ENCODE measurements at regions of chr22 and their contacts with region 1.

Region 1: GRCh38 chr22:30089655-30089974 is 9.4 kb downstream of the HORMAD2 start:
- DNase-seq: no peak
- H3K4me3 ChIP-seq: no peak overlapping the region
- H3K27ac ChIP-seq: no peak overlapping the region
- H3K4me1 ChIP-seq: no peaks in the 10 kb centered on the region
- H3K27me3 ChIP-seq: no peaks in the 10 kb centered on the region
- CTCF ChIP-seq: no peak

Region 2: DNA sequence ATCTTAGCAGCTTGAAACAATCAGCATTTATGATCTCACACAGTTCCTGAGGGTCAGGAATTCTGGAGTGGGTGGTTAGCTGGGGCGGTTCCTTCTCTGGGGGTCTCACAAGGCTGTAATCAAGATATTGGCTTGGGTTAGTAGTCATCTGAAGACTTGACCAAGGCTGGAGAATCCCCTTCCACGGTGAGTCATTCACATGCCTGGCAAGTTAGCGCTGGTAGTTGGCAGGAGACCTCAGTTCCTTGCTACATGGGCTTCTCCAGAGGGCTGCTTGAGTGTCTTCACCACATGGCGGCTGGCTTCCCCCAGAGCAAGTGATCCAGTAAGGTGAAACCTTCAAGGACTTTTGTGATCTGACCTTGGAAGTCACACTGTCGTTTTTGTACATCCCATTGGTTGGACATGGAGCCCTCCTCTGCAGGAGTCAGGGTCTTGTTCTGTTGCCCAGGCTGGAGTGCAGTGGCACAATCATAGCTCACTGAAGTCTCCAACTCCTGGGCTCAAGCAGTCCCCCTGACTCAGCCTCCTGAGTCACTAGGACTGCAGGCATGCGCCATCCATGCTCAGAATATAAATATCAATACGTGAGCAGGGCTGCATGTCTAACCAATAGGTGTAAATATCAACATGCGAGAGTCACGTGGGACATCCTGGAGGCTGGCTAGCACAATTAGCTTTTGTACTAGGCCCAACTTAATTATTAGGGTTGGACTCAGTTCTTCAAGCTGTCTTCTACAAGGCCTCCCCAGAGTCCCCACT is 501.5 kb before region 1 on chr22:
- intact Hi-C with region 1: loop called (anchors 5 kb)
- DNase-seq: no peak
- H3K4me3 ChIP-seq: no peak overlapping the region
- H3K27ac ChIP-seq: no peak overlapping the region
- H3K4me1 ChIP-seq: no peaks in the 10 kb centered on the region
- H3K27me3 ChIP-seq: no peaks in the 10 kb centered on the region
- CTCF ChIP-seq: no peak

Region 3: GRCh38 chr22:29635734-29636357 is 453.8 kb before region 1 on chr22:
- intact Hi-C with region 1: loop called (anchors 5 kb)
- DNase-seq: no peak
- H3K4me3 ChIP-seq: no peak overlapping the region
- H3K27ac ChIP-seq: no peak overlapping the region
- H3K4me1 ChIP-seq: no peaks in the 10 kb centered on the region
- H3K27me3 ChIP-seq: no peaks in the 10 kb centered on the region
- CTCF ChIP-seq: peak; percentile 34 to 53 (median 39)

Region 4: DNA sequence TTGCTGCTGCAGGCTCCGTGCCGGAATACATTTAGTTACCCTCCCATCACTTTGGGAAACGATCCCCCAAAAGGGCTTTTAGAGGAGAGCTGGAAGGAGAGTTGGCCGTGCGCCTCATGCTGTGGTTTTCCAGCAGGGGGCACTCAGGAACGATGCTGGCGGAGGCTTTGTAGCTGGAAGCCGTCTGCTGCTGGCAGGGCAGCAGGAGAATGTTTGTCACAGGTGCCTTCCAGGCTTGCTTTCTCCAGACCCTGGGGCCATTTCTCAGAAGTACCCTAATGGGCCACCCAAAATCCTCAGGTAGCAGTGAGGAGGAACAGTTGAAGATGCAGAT is 399.8 kb before region 1 on chr22:
- intact Hi-C with region 1: loop called (anchors 5 kb)
- DNase-seq: no peak
- H3K4me3 ChIP-seq: no peak overlapping the region
- H3K27ac ChIP-seq: no peak overlapping the region
- H3K4me1 ChIP-seq: no peaks in the 10 kb centered on the region
- H3K27me3 ChIP-seq: no peaks in the 10 kb centered on the region
- CTCF ChIP-seq: peak in 2 of 3 experiments; percentile 20 to 49

Region 5: GRCh38 chr22:30150212-30150611 is 60.6 kb after region 1 on chr22:
- intact Hi-C with region 1: no loop called
- DNase-seq: no peak
- H3K4me3 ChIP-seq: no peak overlapping the region
- H3K27ac ChIP-seq: no peak overlapping the region
- H3K4me1 ChIP-seq: no peaks in the 10 kb centered on the region
- H3K27me3 ChIP-seq: no peaks in the 10 kb centered on the region
- CTCF ChIP-seq: no peak

Region 6: DNA sequence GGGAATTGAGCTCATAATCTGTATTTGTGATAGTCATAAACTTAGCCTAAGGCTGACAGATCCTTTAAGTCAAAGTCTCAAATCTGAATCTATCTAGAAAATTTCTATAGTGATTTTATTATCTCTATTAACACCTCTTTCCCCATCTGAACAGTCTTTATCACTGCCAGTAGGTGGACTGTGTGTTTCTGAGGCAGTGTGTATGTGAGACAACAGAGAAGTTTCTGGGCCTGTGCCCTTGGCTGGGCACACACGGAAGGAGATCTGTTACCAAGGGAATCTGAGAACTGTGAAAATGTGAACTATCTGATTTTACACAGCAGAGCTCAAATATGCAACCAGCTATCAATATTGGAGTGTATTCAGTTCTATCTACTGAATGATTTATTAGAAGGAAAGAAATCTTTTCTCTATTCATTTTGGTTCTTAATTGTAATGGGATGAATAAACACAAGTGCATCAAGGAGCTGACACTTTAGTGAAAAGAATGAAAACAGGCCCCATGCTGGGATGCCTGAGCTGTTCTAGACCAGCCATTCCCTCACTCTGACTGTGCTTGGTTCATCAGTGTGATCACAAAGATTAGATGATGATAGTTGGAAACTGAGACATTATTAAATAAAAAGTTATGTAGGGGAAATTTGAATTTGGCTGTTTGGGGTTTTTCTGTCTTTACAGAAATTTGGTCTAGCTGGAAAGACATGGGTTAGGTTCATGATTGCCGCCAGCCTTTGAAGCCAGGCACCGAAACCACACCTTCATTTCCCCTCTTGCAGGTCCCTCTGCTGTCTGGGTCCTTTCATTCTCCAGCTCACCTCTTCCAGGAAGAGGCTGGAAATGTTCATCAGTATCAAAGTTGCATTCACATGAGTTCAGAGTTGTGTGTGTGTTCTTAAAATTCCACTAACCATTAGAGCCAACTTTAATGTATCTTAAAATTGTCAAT is 88.8 kb after region 1 on chr22:
- intact Hi-C with region 1: no loop called
- DNase-seq: no peak
- H3K4me3 ChIP-seq: no peak overlapping the region
- H3K27ac ChIP-seq: no peak overlapping the region
- H3K4me1 ChIP-seq: no peaks in the 10 kb centered on the region
- H3K27me3 ChIP-seq: no peaks in the 10 kb centered on the region
- CTCF ChIP-seq: no peak